Heart right ventricle (tissue), 16 donors: ENCODE measurements at regions of chr11 and their contacts with region 1.

Region 1: GRCh38 chr11:86802601-86803051 is 2.3 kb downstream of the PRSS23 start:
- DNase-seq: no peak
- ATAC-seq: peak in 4 of 8 donors; percentile 32 to 40 (median 34)
- H3K4me3 ChIP-seq: peak overlapping the region in 3 of 10 donors; percentile 6 to 70 (median 64)
- H3K27ac ChIP-seq: no peak overlapping the region
- H3K4me1 ChIP-seq: peaks cover 0 to 52% (median 23%) of the 10 kb centered on the region in 9 donors
- H3K27me3 ChIP-seq: peaks cover 0 to 42% (median 0%) of the 10 kb centered on the region in 7 donors
- CTCF ChIP-seq: peak; percentile 13 to 63 (median 49)

Region 2: DNA sequence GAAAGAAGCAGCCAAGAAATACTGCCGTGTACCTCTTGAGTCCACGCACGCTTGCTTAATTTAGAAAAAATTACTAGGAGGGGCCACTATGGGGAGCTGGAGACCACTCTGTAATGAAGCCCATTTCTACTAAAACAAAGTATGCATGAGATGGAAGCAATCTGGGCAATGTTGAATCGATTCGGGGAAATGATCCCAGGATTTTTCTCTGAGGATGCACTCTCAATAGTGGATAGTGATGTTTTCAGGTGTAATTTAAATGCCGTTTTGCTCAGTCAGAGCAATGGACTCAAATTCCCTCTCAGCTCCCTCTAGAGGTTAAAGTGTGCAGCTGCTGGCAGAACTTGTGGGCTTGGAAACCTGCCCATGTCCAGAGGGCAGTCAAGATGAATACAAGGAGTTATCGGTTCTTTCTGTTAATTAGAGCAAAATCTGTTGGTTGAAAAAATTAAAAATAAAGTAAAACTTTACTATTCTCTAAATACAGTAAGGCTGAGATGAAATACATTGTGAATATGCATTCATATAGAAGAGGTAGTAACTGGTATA is 194.3 kb before region 1 on chr11:
- intact Hi-C with region 1: loop called in 7 of 10 experiments (anchors 2 to 10 kb)
- DNase-seq: peak; percentile 68 to 73
- ATAC-seq: peak; percentile 72 to 90 (median 86)
- H3K4me3 ChIP-seq: peak overlapping the region in 4 of 10 donors; percentile 4 to 22 (median 15)
- H3K27ac ChIP-seq: peak overlapping the region in 2 of 10 donors; percentile 13 to 15
- H3K4me1 ChIP-seq: peaks cover 6 to 41% (median 26%) of the 10 kb centered on the region in 9 donors
- H3K27me3 ChIP-seq: no peaks in the 10 kb centered on the region
- CTCF ChIP-seq: peak; percentile 84 to 98 (median 94)

Region 3: GRCh38 chr11:86620891-86621521 is 181.6 kb before region 1 on chr11:
- intact Hi-C with region 1: loop called in 2 of 10 experiments (anchors 10 kb)
- DNase-seq: no peak
- ATAC-seq: peak in 4 of 8 donors; percentile 22 to 57 (median 40)
- H3K4me3 ChIP-seq: no peak overlapping the region
- H3K27ac ChIP-seq: peak overlapping the region in 9 of 10 donors; percentile 23 to 77 (median 45)
- H3K4me1 ChIP-seq: peaks cover 3 to 66% (median 35%) of the 10 kb centered on the region in 9 donors
- H3K27me3 ChIP-seq: no peaks in the 10 kb centered on the region
- CTCF ChIP-seq: no peak

Region 4: GRCh38 chr11:86632499-86633269 is 169.9 kb before region 1 on chr11:
- intact Hi-C with region 1: loop called in 2 of 10 experiments (anchors 5 to 10 kb)
- DNase-seq: no peak
- ATAC-seq: peak in 4 of 8 donors; percentile 21 to 39 (median 32)
- H3K4me3 ChIP-seq: no peak overlapping the region
- H3K27ac ChIP-seq: peak overlapping the region in 1 of 10 donors; percentile 3
- H3K4me1 ChIP-seq: peaks cover 10 to 37% (median 35%) of the 10 kb centered on the region in 9 donors
- H3K27me3 ChIP-seq: no peaks in the 10 kb centered on the region
- CTCF ChIP-seq: peak in 6 of 9 donors; percentile 22 to 46 (median 34)

Region 5: DNA sequence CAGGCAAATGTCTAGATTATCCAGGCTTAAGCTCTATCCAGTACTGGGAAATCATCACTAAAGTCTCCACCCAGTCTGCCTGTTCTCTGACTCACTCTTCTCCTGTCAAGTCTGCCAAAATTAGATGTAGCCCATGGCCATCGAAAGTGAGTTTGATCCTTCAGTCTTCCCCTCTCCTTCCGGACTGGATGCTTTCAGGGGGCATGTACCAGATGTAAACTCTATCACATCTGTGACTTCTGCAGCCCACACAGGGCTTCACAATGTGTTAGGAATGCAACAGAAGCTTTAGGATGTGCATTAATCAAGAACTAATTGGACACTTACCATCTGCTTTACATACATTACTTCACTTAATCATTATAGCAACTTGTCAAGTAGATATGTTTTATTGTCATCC is 142.5 kb before region 1 on chr11:
- intact Hi-C with region 1: loop called in 1 of 10 experiments (anchors 5 kb)
- DNase-seq: no peak
- ATAC-seq: peak in 5 of 8 donors; percentile 38 to 88 (median 76)
- H3K4me3 ChIP-seq: no peak overlapping the region
- H3K27ac ChIP-seq: peak overlapping the region in 1 of 10 donors; percentile 41
- H3K4me1 ChIP-seq: peaks cover 0 to 24% (median 12%) of the 10 kb centered on the region in 9 donors
- H3K27me3 ChIP-seq: no peaks in the 10 kb centered on the region
- CTCF ChIP-seq: no peak

Region 6: DNA sequence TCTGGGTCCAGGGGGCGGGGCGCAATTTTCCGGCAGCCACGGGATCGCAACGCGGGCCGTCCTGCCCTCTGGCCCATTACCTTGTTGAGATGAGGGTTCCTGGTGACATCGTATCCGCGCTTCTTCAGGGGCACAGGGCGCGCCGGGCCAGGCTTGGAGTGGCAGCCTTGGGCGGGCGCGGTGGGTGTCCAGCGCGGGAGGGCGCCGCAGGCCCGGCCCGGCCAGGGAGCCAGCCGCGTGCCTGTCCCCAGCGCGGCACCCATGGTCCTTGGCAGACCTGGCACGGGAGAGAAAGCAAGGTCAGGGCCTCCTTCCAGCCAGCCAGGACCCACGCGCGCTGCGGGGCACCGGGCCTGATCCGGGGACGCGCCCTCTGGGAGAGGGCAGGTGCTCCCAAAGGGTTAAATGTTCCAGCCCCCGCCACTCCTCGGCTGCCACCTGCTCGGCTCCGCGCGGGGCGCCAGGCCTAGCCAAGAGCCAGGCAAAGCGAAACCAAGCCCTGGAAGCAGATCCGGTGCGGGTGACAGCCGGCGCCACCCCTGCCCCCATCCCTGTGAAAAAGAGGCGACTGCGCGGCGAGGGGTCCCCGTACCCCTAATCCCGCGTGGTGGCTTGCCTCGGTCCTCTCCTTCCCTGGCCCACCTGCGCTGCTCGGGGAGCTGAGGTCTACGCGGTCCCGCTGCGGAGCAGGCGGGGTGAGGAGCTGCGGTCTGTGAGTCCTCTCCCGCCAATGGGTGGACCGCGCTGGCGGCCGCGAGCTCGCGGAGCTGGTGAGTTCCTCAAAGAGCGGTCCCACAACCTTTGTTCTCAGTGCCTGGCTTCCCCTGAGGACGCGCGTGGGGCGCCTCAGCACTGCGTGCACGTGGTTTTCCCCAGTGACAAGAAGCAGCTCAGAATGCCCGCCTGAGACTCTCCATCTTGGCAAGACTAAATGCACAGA is 130.7 kb before region 1 on chr11 and contains the start of gene ME3:
- intact Hi-C with region 1: loop called in 5 of 10 experiments (anchors 1 to 10 kb)
- DNase-seq: peak; percentile 72 to 73
- ATAC-seq: peak; percentile 80 to 89 (median 86)
- H3K4me3 ChIP-seq: peak within 1 kb of the TSS; percentile 48 to 88 (median 82)
- H3K27ac ChIP-seq: peak within 1 kb of the TSS; percentile 74 to 97 (median 94)
- H3K4me1 ChIP-seq: peaks cover 3 to 62% (median 16%) of the 10 kb centered on the region in 9 donors
- H3K27me3 ChIP-seq: peaks cover 0 to 9% (median 0%) of the 10 kb centered on the region in 7 donors
- CTCF ChIP-seq: peak in 1 of 9 donors; percentile 10
- total RNA-seq, gene ME3: 17.4 to 39.8 (median 33.7) TPM